ENCODE measurements at regions of chr12 and their contacts with region 1.

Region 1: GRCh38 chr12:58368001-58368400 is 426.6 kb downstream of the ATP23 start:
- DNase-seq: no peak
- H3K4me3 ChIP-seq: no peak overlapping the region
- H3K27me3 ChIP-seq: no peaks in the 10 kb centered on the region
- CTCF ChIP-seq: no peak

Region 2: DNA sequence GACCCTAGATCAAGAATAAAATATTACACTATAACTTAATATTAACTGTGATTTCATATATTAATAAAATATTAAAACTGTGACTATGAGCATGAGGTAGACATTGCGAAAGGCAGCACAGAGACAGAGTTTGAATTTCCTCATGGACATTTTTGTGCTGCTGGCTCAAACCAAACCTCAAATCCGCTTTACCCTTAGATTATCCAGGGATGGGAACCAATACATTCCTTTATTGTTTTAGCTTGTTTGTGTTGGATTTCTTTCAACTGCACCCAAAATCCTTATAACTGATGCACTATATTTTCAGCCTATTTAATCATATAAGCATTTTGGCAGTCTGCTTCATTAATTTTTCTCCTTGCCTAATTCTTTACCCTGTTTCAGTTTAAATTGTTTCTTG is 10.0 kb after region 1 on chr12:
- CTCF ChIA-PET with region 1: interaction called, 14 read pairs
- POLR2A ChIA-PET with region 1: no interaction called
- DNase-seq: no peak
- H3K4me3 ChIP-seq: no peak overlapping the region
- H3K27me3 ChIP-seq: no peaks in the 10 kb centered on the region
- CTCF ChIP-seq: no peak